OCI-LY7 (cell line): ENCODE measurements at regions of chr11 and their contacts with region 1.

Region 1: DNA sequence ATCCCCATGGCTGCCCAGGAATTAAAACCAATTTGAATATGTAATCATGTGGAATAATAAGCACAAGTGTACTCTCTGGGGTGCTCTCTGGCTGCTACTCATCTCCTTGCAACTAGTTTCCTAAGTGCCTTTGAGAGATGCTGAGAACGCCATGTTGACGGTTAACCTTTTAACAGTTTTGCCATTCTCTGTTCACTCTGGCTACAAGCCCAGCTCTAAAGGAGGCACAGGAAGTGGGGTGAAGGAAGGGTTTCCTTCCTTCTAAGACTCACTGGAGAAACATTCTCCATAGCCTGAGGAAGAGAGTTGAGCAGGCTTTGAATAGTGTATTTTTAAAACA is 122.0 kb upstream of the ZC3H12C start:
- DNase-seq: peak; percentile 27
- H3K4me3 ChIP-seq: peak overlapping the region; percentile 34
- H3K27ac ChIP-seq: peak overlapping the region; percentile 71
- H3K4me1 ChIP-seq: peaks cover 31% of the 10 kb centered on the region
- CTCF ChIP-seq: no peak

Region 2: DNA sequence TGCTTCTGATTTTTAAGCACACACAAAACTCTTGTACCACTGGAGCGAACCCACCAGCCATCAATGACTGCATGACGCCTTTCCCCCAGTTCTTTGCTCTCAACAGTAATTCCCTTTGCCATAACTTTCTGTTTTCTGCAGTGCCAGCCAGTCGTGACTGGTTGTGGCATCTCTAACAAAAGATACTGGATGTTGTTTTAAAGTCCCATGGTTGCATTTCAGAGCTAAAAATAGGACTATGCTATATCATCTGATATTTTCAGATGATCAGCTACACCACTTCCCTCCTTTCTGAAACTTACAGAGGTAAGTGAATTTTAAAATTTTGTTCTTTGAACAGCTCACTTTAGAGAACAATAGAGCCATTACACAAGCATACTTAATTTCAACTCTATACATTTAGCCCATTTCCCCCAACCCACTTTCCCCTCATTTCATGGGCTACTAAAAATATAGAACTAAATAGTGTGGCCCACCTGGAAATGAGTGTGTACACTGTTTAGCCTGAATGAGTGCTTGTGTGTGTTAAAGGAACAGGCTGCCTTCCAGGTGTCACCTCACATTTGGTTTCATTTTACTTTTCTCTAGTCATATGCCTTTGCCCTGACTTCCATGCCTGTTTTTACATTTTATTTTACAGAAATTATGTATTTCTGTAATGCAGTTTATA is 14.9 kb before region 1 on chr11:
- CTCF ChIA-PET with region 1: interaction called, 3 read pairs
- POLR2A ChIA-PET with region 1: interaction called, 26 read pairs
- intact Hi-C with region 1: no loop called
- DNase-seq: peak; percentile 67
- H3K4me3 ChIP-seq: peak overlapping the region; percentile 39
- H3K27ac ChIP-seq: peak overlapping the region; percentile 76
- H3K4me1 ChIP-seq: peaks cover 35% of the 10 kb centered on the region
- CTCF ChIP-seq: no peak

Region 3: DNA sequence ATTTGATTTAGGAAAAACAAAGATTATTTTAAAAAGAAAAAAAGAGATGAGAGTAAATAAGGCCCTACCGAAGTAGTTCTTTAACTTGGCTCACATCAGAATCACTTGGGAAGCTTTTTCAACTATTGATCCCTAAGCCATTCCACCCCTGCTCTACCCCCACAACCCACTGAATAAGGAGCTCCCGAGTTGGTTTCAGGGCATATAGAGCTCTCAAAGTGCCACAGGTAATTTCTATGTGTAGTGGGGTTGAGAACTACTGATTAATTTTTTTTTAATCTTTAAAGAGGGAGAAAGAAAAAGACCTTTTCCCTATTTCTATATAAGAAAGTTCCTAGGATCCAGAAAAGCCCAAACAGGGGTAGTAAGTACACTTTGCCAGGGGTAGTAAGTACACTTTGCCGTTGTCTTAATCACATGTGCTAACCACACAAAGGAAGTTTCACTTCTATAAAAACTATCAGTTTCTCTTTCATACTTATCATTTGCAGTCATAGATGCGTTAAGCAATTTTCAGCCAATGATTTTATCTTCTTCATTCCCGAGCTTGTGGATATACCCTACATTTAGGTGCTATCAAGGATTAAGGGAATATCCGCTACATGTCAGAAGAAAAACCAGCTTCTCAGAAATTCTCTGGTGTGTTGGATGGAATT is 13.6 kb after region 1 on chr11:
- CTCF ChIA-PET with region 1: no interaction called
- POLR2A ChIA-PET with region 1: interaction called, 22 read pairs
- intact Hi-C with region 1: no loop called
- DNase-seq: peak; percentile 67
- H3K4me3 ChIP-seq: peak overlapping the region; percentile 28
- H3K27ac ChIP-seq: peak overlapping the region; percentile 59
- H3K4me1 ChIP-seq: peaks cover 20% of the 10 kb centered on the region
- CTCF ChIP-seq: no peak